Endothelial cell of umbilical vein (primary cell): ENCODE measurements at regions of chr12 and their contacts with region 1.

Region 1: GRCh38 chr12:54251667-54252284 is 28.1 kb downstream of the CBX5 start:
- DNase-seq: peak; percentile 67
- H3K4me3 ChIP-seq: no peak overlapping the region
- H3K27ac ChIP-seq: no peak overlapping the region
- H3K4me1 ChIP-seq: no peaks in the 10 kb centered on the region
- H3K27me3 ChIP-seq: no peaks in the 10 kb centered on the region
- CTCF ChIP-seq: peak; percentile 43 to 46
- POLR2A ChIP-seq: no peak

Region 2: GRCh38 chr12:54126029-54126695 is 125.6 kb before region 1 on chr12:
- CTCF ChIA-PET with region 1: no interaction called
- POLR2A ChIA-PET with region 1: no interaction called
- dilution Hi-C with region 1: no loop called
- intact Hi-C with region 1: no loop called
- DNase-seq: no peak
- H3K4me3 ChIP-seq: no peak overlapping the region
- H3K27ac ChIP-seq: no peak overlapping the region
- H3K4me1 ChIP-seq: no peaks in the 10 kb centered on the region
- H3K27me3 ChIP-seq: peaks cover 43 to 52% of the 10 kb centered on the region in 2 experiments
- CTCF ChIP-seq: no peak
- POLR2A ChIP-seq: no peak

Region 3: GRCh38 chr12:54201001-54201794 is 50.6 kb before region 1 on chr12:
- CTCF ChIA-PET with region 1: no interaction called
- POLR2A ChIA-PET with region 1: no interaction called
- dilution Hi-C with region 1: no loop called
- intact Hi-C with region 1: no loop called
- DNase-seq: peak; percentile 52
- H3K4me3 ChIP-seq: no peak overlapping the region
- H3K27ac ChIP-seq: no peak overlapping the region
- H3K4me1 ChIP-seq: no peaks in the 10 kb centered on the region
- H3K27me3 ChIP-seq: peaks cover 22 to 37% of the 10 kb centered on the region in 2 experiments
- CTCF ChIP-seq: peak; percentile 86 to 99
- POLR2A ChIP-seq: no peak

Region 4: GRCh38 chr12:54240971-54241588 is 10.7 kb before region 1 on chr12:
- CTCF ChIA-PET with region 1: interaction called, 28 read pairs
- POLR2A ChIA-PET with region 1: no interaction called
- dilution Hi-C with region 1: no loop called
- intact Hi-C with region 1: no loop called
- DNase-seq: no peak
- H3K4me3 ChIP-seq: no peak overlapping the region
- H3K27ac ChIP-seq: no peak overlapping the region
- H3K4me1 ChIP-seq: no peaks in the 10 kb centered on the region
- H3K27me3 ChIP-seq: no peaks in the 10 kb centered on the region
- CTCF ChIP-seq: no peak
- POLR2A ChIP-seq: no peak

Region 5: GRCh38 chr12:54279866-54280467 is 28.2 kb after region 1 on chr12 and contains the start of gene CBX5:
- CTCF ChIA-PET with region 1: interaction called, 39 read pairs
- POLR2A ChIA-PET with region 1: interaction called, 29 read pairs
- dilution Hi-C with region 1: no loop called
- intact Hi-C with region 1: loop called (anchors 1 kb)
- DNase-seq: peak; percentile 99
- H3K4me3 ChIP-seq: peak within 1 kb of the TSS; percentile 28 to 78 (median 61)
- H3K27ac ChIP-seq: peak within 1 kb of the TSS; percentile 88
- H3K4me1 ChIP-seq: peaks cover 43% of the 10 kb centered on the region
- H3K27me3 ChIP-seq: no peaks in the 10 kb centered on the region
- CTCF ChIP-seq: no peak
- POLR2A ChIP-seq: peak; percentile 1
- total RNA-seq, gene CBX5: 111 TPM in 2 replicates

Region 6: DNA sequence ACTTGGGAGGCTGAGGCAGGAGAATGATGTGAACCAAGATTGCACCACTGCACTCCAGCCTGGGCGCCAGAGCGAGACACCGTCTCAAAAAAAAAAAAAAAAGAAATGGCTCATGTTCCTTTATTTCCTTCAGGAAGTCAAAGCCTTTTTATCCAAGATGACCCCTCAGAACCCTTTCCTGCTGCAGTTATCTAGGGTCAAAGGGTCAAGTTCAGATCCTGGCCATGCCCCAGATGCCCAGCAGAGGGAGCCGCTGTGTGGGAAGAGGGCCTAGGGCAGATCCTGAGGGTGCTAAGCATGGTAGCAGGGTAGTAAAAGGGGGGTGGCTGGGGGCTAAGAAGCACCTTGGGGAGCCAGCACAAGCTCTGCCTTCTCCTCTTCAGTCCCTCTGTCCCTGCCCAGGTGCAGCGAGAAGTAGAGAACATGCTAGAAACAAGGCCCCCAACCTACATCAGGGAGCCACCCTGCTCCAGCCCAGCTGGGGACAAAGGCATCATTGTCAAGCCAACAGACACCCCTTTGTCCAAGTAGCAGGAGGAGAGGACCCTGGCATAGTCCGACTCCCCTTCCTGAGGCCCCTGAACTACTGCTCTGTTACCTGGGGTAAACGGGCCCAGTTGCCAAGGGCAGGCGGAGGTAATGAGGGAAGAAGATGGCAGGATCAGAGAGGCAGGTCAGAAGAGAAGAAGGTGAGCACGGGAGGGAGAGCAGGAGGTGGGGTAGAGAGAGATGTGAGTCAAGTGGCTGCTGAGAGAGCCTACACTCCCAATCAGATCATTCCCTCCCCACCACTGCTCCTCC is 42.6 kb after region 1 on chr12:
- CTCF ChIA-PET with region 1: interaction called, 31 read pairs
- POLR2A ChIA-PET with region 1: interaction called, 4 read pairs
- dilution Hi-C with region 1: no loop called
- intact Hi-C with region 1: no loop called
- DNase-seq: peak; percentile 53
- H3K4me3 ChIP-seq: no peak overlapping the region
- H3K27ac ChIP-seq: no peak overlapping the region
- H3K4me1 ChIP-seq: no peaks in the 10 kb centered on the region
- H3K27me3 ChIP-seq: peaks cover 4 to 6% of the 10 kb centered on the region in 2 experiments
- CTCF ChIP-seq: peak; percentile 71 to 74
- POLR2A ChIP-seq: no peak

Region 7: DNA sequence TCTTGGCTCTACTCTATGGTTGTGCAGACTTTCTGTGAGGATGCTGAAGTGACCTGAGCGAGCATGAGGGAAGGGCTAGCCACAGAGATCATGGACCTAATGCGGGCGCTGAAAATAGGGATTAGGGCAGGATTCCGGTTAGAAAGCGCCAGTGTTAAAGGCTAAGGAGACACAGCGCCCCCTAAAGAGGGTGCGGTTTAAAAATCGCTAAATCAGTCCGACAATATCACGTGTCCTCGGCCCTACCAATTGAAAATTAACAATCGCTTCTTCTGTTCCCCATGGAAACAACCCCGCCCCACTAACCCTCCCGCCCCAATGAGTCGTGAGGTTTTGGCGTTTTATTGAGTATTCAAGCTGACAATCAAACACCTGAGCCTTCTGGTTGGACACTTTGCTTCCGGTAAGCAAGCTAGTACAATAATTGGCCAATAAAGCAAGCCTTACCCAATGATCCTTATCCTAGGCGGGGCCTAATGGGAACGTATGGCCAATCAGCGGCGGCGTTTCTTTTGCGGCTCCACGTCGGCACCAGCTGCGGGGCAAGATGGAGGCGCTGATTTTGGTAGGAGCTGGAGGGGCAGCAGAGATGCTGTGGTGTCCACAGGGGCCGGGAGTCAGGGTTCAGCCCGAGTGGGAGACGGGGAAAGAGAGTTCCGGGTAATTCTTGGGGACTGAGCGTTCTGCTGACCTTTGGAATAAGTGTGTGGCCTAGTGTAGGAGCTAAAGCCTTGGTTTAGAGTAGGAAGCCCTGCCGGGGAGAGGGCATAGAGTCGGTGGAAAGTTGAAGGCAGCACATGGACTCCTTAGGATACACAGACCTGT is 73.1 kb after region 1 on chr12 and contains the start of gene COPZ1:
- CTCF ChIA-PET with region 1: interaction called, 18 read pairs
- POLR2A ChIA-PET with region 1: no interaction called
- dilution Hi-C with region 1: no loop called
- intact Hi-C with region 1: loop called (anchors 1 kb)
- DNase-seq: peak; percentile 100
- H3K4me3 ChIP-seq: peak within 1 kb of the TSS; percentile 38 to 85 (median 67)
- H3K27ac ChIP-seq: peak within 1 kb of the TSS; percentile 73
- H3K4me1 ChIP-seq: peaks cover 20% of the 10 kb centered on the region
- H3K27me3 ChIP-seq: no peaks in the 10 kb centered on the region
- CTCF ChIP-seq: peak; percentile 72 to 80
- POLR2A ChIP-seq: peak; percentile 91
- total RNA-seq, gene COPZ1: 137 and 143 TPM in 2 replicates

Region 8: GRCh38 chr12:54359033-54359761 is 107.4 kb after region 1 on chr12:
- CTCF ChIA-PET with region 1: interaction called, 21 read pairs
- POLR2A ChIA-PET with region 1: no interaction called
- dilution Hi-C with region 1: no loop called
- intact Hi-C with region 1: loop called (anchors 1 kb)
- DNase-seq: peak; percentile 99
- H3K4me3 ChIP-seq: peak overlapping the region; percentile 27 to 69 (median 69)
- H3K27ac ChIP-seq: peak overlapping the region; percentile 82
- H3K4me1 ChIP-seq: peaks cover 27% of the 10 kb centered on the region
- H3K27me3 ChIP-seq: no peaks in the 10 kb centered on the region
- CTCF ChIP-seq: no peak
- POLR2A ChIP-seq: peak; percentile 78

Region 9: DNA sequence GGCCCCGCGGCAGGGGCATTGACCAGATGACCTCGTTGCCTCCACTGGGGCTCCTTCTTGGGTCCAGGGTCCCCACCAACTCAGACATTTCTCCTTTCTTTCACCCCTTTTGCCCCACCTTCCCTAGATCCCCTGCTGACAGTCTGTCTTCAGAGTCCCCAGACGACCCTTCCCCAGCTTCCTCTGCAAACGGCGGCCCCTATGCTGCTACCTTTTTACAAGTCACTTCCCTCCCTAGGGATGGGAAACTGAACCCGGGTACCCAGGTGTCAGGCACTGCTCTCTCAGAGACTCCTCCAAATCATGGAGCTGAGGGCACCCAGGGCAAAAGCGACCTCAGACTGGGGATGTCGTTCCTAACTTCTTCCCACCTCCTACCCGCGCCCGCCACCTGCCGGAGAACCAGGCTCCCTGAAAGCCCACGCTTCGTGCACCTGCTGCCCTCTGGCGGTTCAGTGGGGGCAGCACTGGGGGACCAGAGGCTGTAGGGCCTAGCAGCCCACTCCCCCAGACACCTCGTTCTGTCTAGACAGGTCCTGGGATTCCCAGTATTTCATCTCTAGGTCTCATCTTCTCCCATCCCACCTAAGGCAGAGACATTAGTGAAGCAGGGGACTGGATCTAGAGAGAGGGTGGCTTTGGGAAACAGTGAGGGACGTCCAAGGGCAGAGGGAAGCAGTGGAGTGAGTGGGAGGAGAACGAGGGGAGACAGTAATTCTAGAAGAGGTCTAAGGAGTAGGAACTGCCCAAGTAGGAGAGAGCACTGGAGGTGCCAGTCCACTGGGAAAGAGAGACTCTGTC is 127.8 kb after region 1 on chr12:
- CTCF ChIA-PET with region 1: interaction called, 22 read pairs
- POLR2A ChIA-PET with region 1: no interaction called
- dilution Hi-C with region 1: no loop called
- intact Hi-C with region 1: no loop called
- DNase-seq: peak; percentile 83
- H3K4me3 ChIP-seq: peak overlapping the region in 2 of 3 experiments; percentile 10 to 47
- H3K27ac ChIP-seq: no peak overlapping the region
- H3K4me1 ChIP-seq: peaks cover 4% of the 10 kb centered on the region
- H3K27me3 ChIP-seq: no peaks in the 10 kb centered on the region
- CTCF ChIP-seq: peak; percentile 100
- POLR2A ChIP-seq: no peak